GM12878 (cell line): ENCODE measurements at regions of chr6 and their contacts with region 1.

Region 1: GRCh38 chr6:3209114-3210023 is 18.1 kb downstream of the TUBB2B start:
- DNase-seq: peak; percentile 60
- ATAC-seq: peak; percentile 78
- H3K4me3 ChIP-seq: no peak overlapping the region
- H3K27ac ChIP-seq: peak overlapping the region; percentile 71
- H3K4me1 ChIP-seq: peaks cover 44% of the 10 kb centered on the region
- H3K27me3 ChIP-seq: no peaks in the 10 kb centered on the region
- CTCF ChIP-seq: peak in 1 of 3 experiments; percentile 30; a peak in 2 of 6 replicates
- EP300 ChIP-seq: peak; percentile 46 to 71; a peak in 2 of 4 replicates
- POLR2A ChIP-seq: no peak
- RAD21 ChIP-seq: peak; percentile 39

Region 2: DNA sequence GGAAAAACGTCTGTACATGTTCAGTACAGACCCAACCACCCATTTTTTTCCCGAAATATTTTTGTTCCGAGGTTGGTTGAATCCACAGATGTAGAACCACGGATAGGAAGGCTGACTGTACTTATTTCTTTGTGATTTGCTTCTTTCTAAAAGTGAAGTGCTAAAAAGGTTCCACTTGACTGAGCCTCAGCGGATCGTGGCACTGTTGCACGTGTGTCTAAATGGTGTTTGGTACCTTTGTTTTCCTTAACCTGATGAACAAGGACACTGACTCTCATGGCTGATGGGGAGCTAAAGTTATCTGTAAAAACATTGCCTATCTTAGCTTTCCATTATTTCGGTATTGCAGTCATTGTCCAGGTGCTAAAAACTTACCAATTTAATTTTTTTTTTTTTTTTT is 84.7 kb before region 1 on chr6:
- CTCF ChIA-PET with region 1: interaction called, 5 read pairs
- POLR2A ChIA-PET with region 1: no interaction called
- RAD21 ChIA-PET with region 1: interaction called, 4 read pairs
- SMC1A ChIA-PET with region 1: interaction called, 3 read pairs
- in situ Hi-C with region 1: no loop called
- intact Hi-C with region 1: loop called (anchors 2 kb)
- DNase-seq: no peak
- ATAC-seq: no peak
- H3K4me3 ChIP-seq: no peak overlapping the region
- H3K27ac ChIP-seq: no peak overlapping the region
- H3K4me1 ChIP-seq: peaks cover 7% of the 10 kb centered on the region
- H3K27me3 ChIP-seq: no peaks in the 10 kb centered on the region
- CTCF ChIP-seq: no peak
- EP300 ChIP-seq: no peak
- POLR2A ChIP-seq: no peak
- RAD21 ChIP-seq: no peak

Region 3: GRCh38 chr6:3139090-3139903 is 70.1 kb before region 1 on chr6:
- CTCF ChIA-PET with region 1: no interaction called
- POLR2A ChIA-PET with region 1: no interaction called
- RAD21 ChIA-PET with region 1: no interaction called
- SMC1A ChIA-PET with region 1: no interaction called
- in situ Hi-C with region 1: no loop called
- intact Hi-C with region 1: no loop called
- DNase-seq: no peak
- ATAC-seq: peak; percentile 69
- H3K4me3 ChIP-seq: no peak overlapping the region
- H3K27ac ChIP-seq: no peak overlapping the region
- H3K4me1 ChIP-seq: peaks cover 7% of the 10 kb centered on the region
- H3K27me3 ChIP-seq: no peaks in the 10 kb centered on the region
- CTCF ChIP-seq: no peak
- EP300 ChIP-seq: no peak
- POLR2A ChIP-seq: no peak
- RAD21 ChIP-seq: no peak

Region 4: DNA sequence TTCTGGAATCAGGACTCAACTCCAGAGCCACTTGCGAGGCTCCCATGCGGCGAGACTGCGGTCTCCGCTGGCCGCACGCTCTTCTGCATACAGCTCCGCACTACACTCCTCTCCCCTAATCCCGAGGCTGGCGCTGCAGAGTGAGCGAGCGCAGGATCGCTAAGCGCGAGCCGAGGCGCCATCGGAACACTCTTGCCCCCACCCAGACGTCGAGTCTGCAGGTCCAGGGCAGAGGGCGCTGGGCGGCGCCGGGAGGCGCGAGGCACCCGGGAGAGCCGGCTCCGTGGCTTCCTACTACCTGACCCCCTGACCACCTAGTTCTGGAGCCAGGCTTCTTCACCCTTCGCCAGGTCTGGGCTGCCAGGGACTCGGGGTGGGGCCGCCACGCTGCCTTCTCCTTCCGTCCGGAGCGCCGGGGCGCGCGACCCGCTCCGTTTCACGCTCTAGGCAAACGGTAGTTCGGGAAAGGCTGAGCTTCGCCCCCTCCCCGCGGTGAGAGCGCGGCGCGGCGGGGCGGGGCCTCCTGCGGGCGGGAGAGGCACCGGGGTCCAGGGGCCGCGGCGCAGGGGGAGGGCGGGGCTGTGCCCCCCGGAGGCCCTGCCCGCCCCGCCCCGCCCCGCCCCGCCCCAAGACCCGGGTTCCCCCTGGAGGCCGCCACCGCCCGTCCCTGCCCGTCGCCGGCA is 46.7 kb before region 1 on chr6:
- CTCF ChIA-PET with region 1: interaction called, 6 read pairs
- POLR2A ChIA-PET with region 1: no interaction called
- RAD21 ChIA-PET with region 1: interaction called, 3 read pairs
- SMC1A ChIA-PET with region 1: interaction called, 3 read pairs
- in situ Hi-C with region 1: no loop called
- intact Hi-C with region 1: loop called (anchors 2 kb)
- DNase-seq: no peak
- ATAC-seq: peak; percentile 90
- H3K4me3 ChIP-seq: peak overlapping the region; percentile 63; the same call in 1 of the 2 replicates
- H3K27ac ChIP-seq: peak overlapping the region; percentile 33; the same call in 1 of the 2 replicates
- H3K4me1 ChIP-seq: peaks cover 5% of the 10 kb centered on the region
- H3K27me3 ChIP-seq: peaks cover 0 to 2% of the 10 kb centered on the region in 2 experiments; a peak in 1 of 4 replicates
- CTCF ChIP-seq: no peak; a peak in 1 of 6 replicates
- EP300 ChIP-seq: no peak
- POLR2A ChIP-seq: no peak; the same call in 1 of the 2 replicates
- RAD21 ChIP-seq: no peak

Region 5: DNA sequence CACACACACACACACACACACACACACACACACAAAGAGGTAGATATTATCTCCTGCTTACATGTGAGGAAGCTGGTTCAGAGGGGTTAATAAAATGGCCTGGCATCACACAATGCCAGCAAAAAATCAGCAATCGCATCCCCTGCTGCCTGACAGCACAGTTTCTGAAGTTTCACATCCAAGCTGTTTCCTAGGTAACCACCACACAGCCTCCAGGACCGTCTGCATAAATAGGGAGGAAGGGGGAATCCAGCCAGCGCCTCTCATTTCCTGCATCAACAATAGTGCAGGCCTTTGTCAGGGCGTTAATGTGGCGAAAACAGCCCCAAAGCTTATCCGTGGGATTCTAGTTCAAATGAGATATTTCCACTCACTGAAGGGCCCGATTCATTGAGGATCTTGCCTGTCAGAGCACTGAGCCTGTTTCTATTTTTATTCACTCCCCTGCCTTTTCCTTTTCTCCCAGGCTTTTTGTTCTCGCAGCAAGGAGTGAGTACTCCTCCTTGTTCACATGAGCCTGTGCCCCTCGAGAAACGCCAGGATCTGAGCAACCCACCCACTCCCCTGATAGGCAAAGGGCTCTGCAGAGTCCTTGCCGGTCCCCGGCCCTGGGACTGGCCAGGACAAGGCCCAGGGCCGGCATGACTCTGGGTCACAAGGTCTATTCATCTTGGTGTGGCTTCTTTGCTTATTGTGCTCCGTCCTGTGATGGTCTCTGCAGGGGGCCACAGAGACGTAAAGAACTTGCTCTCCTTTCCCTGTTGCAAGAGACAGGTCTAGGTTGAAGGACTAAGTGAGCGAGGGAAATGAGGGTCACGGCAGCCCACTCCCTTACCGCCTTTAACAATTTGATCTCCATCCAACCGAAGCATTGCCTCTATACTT is 14.6 kb before region 1 on chr6:
- CTCF ChIA-PET with region 1: interaction called, 3 read pairs
- POLR2A ChIA-PET with region 1: interaction called, 3 read pairs
- RAD21 ChIA-PET with region 1: interaction called, 3 read pairs
- SMC1A ChIA-PET with region 1: interaction called, 10 read pairs
- in situ Hi-C with region 1: no loop called
- intact Hi-C with region 1: no loop called
- DNase-seq: no peak
- ATAC-seq: peak; percentile 59
- H3K4me3 ChIP-seq: no peak overlapping the region
- H3K27ac ChIP-seq: peak overlapping the region; percentile 37
- H3K4me1 ChIP-seq: peaks cover 11% of the 10 kb centered on the region
- H3K27me3 ChIP-seq: no peaks in the 10 kb centered on the region
- CTCF ChIP-seq: no peak
- EP300 ChIP-seq: no peak
- POLR2A ChIP-seq: no peak
- RAD21 ChIP-seq: no peak